AG04449 (cell line): ENCODE measurements at regions of chr12 and their contacts with region 1.

Region 1: GRCh38 chr12:3803865-3804472 is 51.1 kb upstream of the CRACR2A start:
- DNase-seq: peak; percentile 16
- H3K4me3 ChIP-seq: no peak overlapping the region
- CTCF ChIP-seq: peak; percentile 82

Region 2: DNA sequence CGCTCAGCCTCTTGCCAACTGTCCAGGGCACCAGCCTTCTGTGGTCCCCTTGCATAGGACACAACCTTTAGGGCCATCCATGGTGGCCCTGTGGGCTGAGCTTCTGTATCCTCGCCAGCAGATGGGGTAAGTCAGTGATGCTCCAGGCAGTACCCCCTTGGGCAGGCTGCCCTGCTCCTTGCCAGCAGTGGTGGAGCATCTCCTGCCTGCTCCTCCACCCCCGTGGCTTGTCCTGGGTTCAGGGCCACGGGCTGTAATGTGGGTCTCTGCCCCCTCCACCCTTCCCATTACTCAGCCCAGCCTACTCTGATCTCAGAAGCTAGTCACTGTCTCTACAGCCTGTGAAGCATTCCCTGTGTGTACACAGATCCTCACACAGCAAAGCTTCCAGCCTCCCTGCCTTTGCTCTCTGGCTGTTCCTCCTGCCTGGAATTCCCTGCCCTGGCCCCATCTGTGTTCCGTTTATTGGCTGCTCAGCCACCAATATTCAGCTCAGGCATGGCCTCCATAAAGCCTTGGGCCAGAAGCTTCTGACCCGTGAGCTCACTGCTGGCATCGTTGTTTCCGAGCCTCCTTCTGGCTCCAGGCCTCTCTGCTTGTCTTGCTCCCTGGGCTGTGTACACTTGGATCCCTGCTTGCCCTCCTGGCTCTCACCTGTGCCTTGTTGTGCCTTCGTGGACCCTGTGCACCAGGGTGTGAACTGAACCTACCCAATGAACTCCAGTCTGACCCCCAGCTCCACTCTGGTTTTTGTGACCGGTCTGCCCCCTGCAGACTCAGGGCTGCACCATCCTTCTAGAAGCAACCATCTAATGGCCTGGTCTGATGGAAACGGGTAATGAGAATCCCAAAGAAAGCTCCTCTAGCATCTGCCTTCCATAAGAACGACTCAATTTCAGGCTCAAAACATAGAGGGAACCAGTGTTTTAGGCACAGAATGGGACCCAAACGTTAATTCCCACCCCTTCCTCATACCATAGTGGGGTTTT is 490.0 kb before region 1 on chr12:
- CTCF ChIA-PET with region 1: interaction called, 14 read pairs
- POLR2A ChIA-PET with region 1: no interaction called
- DNase-seq: no peak
- H3K4me3 ChIP-seq: no peak overlapping the region
- CTCF ChIP-seq: peak; percentile 47

Region 3: DNA sequence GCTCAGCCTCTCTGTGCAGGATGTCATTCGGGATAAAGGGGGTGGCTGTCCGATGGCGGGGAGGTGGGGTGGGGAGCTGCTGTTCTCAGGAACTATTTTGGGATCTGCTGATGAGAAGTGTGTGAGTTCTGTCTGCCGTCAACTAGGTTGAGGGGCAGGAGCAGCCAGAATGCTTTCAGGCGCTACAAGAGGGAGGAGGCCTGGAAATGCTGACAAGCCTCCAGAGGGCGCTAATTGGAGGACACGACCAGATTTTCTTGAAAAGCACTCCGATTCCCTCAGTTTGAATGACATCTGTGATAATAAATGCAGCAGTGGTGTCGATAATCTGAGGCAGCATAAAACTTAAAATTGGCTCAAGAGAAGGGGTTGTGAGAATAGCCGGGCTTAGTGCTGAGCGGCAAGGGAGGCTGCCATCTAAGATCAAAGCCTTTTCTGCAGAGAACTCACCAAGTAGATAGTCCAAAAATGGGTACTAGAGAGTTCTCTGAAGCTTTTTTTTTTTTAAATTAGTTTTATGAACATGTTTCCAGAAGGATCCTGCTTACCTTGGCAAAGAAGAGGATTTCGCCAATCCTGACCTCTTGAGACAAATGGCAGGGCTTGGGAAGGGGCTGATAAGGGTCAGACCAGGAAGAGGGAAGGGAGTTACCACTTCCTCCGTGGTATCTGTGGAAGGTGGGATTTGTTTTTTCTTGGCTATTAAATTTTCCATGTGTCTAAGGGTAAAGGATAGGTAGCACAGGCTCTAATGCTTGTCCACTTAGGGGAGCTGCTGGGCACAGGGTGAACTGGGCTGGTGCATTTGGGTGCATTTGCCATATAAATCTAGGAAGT is 145.4 kb before region 1 on chr12:
- CTCF ChIA-PET with region 1: interaction called, 11 read pairs
- POLR2A ChIA-PET with region 1: no interaction called
- DNase-seq: no peak
- H3K4me3 ChIP-seq: no peak overlapping the region
- CTCF ChIP-seq: peak; percentile 53

Region 4: DNA sequence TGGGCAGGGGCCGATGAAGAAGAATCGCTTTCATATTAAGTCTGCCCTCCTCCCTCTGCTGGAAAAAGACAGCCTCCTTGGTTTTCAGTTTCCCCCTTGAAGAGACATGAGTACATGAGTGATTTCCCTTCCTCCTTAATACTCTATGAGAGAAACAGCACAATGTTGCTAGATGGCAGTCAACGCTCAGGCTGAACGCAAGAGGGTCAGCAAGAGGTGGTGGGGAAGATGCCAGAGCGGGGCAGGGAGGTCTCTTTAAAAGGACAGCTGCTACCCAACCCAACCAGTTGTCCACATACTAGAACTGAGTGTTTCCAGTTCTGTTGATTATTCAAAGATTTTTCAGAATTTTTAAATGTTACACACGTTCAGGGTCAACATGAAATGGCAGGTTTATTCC is 73.9 kb before region 1 on chr12:
- CTCF ChIA-PET with region 1: no interaction called
- POLR2A ChIA-PET with region 1: no interaction called
- DNase-seq: no peak
- H3K4me3 ChIP-seq: no peak overlapping the region
- CTCF ChIP-seq: no peak

Region 5: GRCh38 chr12:3815094-3815766 is 11.3 kb after region 1 on chr12:
- CTCF ChIA-PET with region 1: interaction called, 23 read pairs
- POLR2A ChIA-PET with region 1: no interaction called
- DNase-seq: no peak
- H3K4me3 ChIP-seq: no peak overlapping the region
- CTCF ChIP-seq: no peak

Region 6: GRCh38 chr12:3913278-3913677 is 109.3 kb after region 1 on chr12:
- CTCF ChIA-PET with region 1: no interaction called
- POLR2A ChIA-PET with region 1: no interaction called
- DNase-seq: no peak
- H3K4me3 ChIP-seq: no peak overlapping the region
- CTCF ChIP-seq: no peak